Right ventricle myocardium inferior (tissue), 1 donor: ENCODE measurements at regions of chr9 and their contacts with region 1.

Region 1: DNA sequence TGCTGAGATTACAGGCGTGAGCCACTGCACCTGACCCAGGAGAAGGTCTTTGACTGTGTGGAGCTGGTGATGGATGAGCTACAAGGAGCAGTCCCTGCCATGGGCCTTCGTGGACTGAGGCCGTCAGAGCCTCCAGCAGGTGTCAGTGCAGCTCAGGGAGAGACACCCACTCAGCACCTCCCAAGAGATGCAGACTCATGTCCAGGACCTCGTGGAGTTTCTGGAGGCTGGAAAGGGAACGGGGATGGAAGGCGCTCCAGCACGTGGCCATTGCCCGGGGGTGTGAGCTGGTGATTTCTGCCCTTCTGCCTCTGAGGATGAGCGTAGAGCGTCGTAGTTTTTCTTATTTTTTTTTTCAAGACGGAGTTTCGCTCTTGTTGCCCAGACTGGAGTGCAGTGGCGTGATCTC is 9.5 kb downstream of the TOR4A start:
- DNase-seq: no peak
- ATAC-seq: peak; percentile 71

Region 2: GRCh38 chr9:136991993-136992818 is 294.8 kb before region 1 on chr9 and contains the start of gene PAXX:
- intact Hi-C with region 1: no loop called
- DNase-seq: peak; percentile 97
- ATAC-seq: peak; percentile 97
- total RNA-seq, gene PAXX: 26.9 TPM

Region 3: GRCh38 chr9:137417161-137418021 is 130.4 kb after region 1 on chr9:
- intact Hi-C with region 1: no loop called
- DNase-seq: no peak
- ATAC-seq: peak; percentile 22

Region 4: DNA sequence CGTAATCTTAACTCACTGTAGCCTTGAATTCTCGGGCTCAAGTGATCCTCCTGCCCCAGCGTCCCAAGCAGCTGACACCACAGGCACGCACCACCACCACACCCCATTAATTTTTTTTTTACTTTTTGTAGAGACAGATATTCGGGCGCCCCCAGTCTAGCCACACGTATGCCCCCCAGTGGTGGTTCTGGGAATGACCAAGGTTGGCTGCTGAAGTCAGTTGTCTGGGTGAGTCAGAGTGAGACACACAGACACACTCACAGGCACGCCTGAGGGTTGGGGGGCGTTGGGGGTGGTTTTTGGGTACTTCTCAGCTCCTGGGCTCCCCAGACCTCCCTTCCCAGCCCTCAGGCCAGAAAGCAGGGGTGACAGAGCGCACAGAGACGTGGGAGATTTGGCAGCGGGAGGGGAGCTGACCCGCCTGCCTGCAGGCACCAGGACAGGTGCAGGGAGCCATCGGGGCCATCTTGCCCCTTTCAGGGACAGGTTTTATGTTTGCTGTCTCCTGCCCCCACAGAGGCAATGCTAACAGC is 158.4 kb after region 1 on chr9:
- intact Hi-C with region 1: loop called (anchors 2 kb)
- DNase-seq: peak; percentile 86
- ATAC-seq: peak; percentile 69